Activated CD4-positive, alpha-beta T cell treated with anti-CD3 and anti-CD28 coated beads for 36 hours (primary cell): ENCODE measurements at regions of chr13 and their contacts with region 1.

Region 1: DNA sequence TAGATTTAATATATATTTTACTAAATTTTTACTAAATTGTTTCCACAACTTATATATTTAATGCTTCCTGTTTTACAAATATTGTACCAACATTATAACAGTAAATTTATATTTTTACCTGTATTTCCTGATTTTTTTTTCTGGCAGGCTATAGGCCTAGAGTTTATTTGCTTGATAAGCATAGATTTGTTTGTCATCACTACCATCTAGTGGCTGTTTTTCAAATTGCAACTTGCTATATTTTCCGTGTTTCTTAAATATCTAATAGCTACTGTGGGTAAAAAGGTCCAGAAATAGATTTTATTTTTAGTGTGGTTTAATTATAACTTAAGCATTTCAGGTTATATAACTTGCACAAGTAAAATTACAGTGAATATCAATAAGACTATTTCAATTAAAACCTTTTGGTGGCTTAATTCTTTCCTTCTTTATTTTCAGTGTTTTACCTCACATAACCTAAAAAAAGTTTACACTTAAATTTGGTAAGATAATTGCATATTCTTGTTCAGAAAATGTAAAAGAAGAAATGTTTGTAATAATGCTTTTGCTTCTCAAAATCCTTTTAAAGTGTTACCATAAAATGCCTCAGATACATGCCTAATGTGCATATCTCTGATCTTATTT is 60.6 kb downstream of the NDFIP2 start:
- DNase-seq: no peak
- ATAC-seq: no peak
- H3K4me3 Mint-ChIP-seq: no peak overlapping the region
- H3K27ac Mint-ChIP-seq: no peak overlapping the region
- H3K4me1 Mint-ChIP-seq: peaks cover 9% of the 10 kb centered on the region
- H3K27me3 Mint-ChIP-seq: no peaks in the 10 kb centered on the region

Region 2: DNA sequence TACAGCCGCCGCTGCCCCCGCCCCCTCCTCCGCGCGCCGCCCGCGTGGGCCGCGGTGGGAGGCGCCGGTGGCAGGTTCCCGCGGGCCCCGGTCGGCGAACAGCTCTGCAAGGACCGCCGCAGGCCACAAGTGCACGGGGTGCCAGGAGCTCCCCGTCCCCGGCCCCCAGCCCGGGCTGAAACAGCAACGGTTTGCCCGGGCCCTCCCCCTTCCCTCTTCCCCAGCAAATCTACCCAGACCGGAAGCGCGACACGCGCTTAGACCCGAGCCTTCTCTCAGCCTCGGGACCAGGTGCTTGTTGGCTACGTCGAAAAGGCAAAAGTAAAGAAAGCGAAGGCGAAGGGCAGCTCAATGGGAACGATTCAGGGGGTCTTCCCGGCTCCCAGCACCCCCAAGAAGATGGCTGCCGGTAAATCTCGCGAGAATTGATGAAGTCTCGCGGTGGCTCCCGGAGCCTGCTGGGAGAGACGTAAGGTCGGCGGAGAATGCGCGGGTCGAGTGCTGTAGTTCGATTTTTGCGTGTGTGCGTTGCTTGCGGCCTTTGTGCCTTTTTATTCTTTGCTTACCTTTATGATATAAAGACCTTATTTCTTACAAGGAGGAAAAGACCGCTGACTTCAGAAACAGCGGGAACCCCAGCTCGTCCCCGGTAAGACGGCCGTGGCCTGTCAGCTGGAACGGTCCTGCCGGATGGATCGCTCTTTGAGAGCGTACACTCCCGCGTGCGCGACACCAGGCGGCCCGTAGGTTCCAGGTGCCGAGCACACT is 135.5 kb before region 1 on chr13 and contains the start of gene RBM26:
- CTCF ChIA-PET with region 1: interaction called, 24 read pairs
- POLR2A ChIA-PET with region 1: interaction called, 6 read pairs
- intact Hi-C with region 1: loop called in 1 of 2 experiments (anchors 1 kb)
- DNase-seq: peak; percentile 97
- ATAC-seq: peak; percentile 87
- H3K4me3 Mint-ChIP-seq: no peak within 1 kb of the TSS
- H3K27ac Mint-ChIP-seq: peak within 1 kb of the TSS; percentile 98
- H3K4me1 Mint-ChIP-seq: peaks cover 44% of the 10 kb centered on the region
- H3K27me3 Mint-ChIP-seq: no peaks in the 10 kb centered on the region
- total RNA-seq, gene RBM26: 61.3 to 79.6 TPM

Region 3: DNA sequence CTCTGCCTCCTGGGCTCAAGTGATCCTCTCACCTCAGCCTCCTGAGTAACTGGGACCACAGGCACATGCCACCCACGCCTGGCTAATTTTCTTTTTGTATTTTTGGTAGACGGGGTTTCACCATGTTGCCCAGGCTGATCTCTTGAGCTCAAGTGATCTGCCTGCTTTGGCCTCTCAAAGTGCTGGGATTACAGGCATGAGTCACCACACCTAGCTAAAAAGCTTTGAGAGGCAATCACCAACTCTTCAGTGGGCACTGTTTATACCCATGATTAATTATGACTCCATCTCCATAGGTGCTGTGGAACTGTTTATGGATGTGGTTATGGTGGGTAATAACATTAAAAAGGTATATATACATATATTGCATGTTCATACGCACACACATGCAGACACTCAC is 128.0 kb before region 1 on chr13:
- CTCF ChIA-PET with region 1: interaction called, 29 read pairs
- POLR2A ChIA-PET with region 1: no interaction called
- intact Hi-C with region 1: no loop called
- DNase-seq: no peak
- ATAC-seq: peak; percentile 42
- H3K4me3 Mint-ChIP-seq: no peak overlapping the region
- H3K27ac Mint-ChIP-seq: no peak overlapping the region
- H3K4me1 Mint-ChIP-seq: peaks cover 5% of the 10 kb centered on the region
- H3K27me3 Mint-ChIP-seq: no peaks in the 10 kb centered on the region

Region 4: DNA sequence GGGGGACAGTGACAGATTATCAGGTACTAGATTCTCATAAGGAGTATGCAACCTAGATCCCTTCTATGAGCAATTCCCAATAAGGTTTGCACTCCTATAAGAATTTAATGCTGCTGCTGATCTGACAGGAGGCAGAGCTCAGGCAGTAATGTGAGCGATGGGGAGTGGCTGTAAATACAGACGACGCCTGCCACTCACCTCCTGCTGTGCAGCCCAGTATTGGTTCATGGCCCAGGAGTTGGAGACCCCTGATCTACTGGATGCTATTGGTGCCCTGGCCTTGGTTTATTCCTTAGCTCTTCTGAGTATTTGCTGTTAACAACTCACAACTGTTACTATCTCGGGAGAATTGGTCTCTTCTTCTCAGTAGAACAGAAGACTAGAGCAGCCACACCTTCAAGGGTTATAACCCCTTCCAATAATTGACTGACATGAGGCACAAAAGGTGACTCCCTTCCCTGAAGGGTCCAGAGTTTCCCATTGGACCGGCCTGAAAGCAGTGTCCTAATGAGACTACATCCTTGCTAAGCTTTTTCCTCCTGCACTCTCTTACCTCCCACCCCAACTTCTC is 100.5 kb before region 1 on chr13:
- CTCF ChIA-PET with region 1: interaction called, 12 read pairs
- POLR2A ChIA-PET with region 1: no interaction called
- intact Hi-C with region 1: no loop called
- DNase-seq: no peak
- ATAC-seq: no peak
- H3K4me3 Mint-ChIP-seq: no peak overlapping the region
- H3K27ac Mint-ChIP-seq: no peak overlapping the region
- H3K4me1 Mint-ChIP-seq: peaks cover 17% of the 10 kb centered on the region
- H3K27me3 Mint-ChIP-seq: no peaks in the 10 kb centered on the region

Region 5: GRCh38 chr13:79516595-79516994 is 24.9 kb before region 1 on chr13:
- CTCF ChIA-PET with region 1: interaction called, 25 read pairs
- POLR2A ChIA-PET with region 1: no interaction called
- intact Hi-C with region 1: no loop called
- DNase-seq: no peak
- ATAC-seq: no peak
- H3K4me3 Mint-ChIP-seq: no peak overlapping the region
- H3K27ac Mint-ChIP-seq: no peak overlapping the region
- H3K4me1 Mint-ChIP-seq: peaks cover 53% of the 10 kb centered on the region
- H3K27me3 Mint-ChIP-seq: no peaks in the 10 kb centered on the region

Region 6: DNA sequence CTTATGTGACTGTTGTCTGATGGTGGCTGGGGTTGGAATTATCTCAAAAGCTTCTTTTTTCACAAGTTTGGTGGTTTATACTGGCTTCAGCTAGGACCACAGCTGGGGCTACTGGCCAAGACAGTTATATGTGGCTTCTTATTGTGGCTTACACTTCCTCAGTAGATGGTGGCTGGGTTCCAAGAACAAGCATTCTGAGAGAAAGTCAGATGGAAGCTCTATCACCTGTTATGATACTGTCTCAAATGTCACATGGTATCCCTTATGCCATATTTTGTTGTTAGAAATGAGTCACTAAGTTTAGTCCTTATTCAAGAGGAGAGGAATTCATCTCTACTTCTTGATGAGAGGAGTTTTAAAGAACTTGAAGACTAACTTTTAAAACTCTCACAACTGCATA is 19.0 kb before region 1 on chr13:
- CTCF ChIA-PET with region 1: interaction called, 32 read pairs
- POLR2A ChIA-PET with region 1: no interaction called
- intact Hi-C with region 1: loop called in 1 of 2 experiments (anchors 2 kb)
- DNase-seq: peak; percentile 48
- ATAC-seq: peak; percentile 91
- H3K4me3 Mint-ChIP-seq: peak overlapping the region; percentile 26
- H3K27ac Mint-ChIP-seq: peak overlapping the region; percentile 91
- H3K4me1 Mint-ChIP-seq: peaks cover 26% of the 10 kb centered on the region
- H3K27me3 Mint-ChIP-seq: no peaks in the 10 kb centered on the region

Region 7: GRCh38 chr13:79528759-79529191 is 12.8 kb before region 1 on chr13:
- CTCF ChIA-PET with region 1: interaction called, 32 read pairs
- POLR2A ChIA-PET with region 1: no interaction called
- intact Hi-C with region 1: loop called in 1 of 2 experiments (anchors 2 kb)
- DNase-seq: no peak
- ATAC-seq: no peak
- H3K4me3 Mint-ChIP-seq: no peak overlapping the region
- H3K27ac Mint-ChIP-seq: no peak overlapping the region
- H3K4me1 Mint-ChIP-seq: peaks cover 19% of the 10 kb centered on the region
- H3K27me3 Mint-ChIP-seq: no peaks in the 10 kb centered on the region

Region 8: DNA sequence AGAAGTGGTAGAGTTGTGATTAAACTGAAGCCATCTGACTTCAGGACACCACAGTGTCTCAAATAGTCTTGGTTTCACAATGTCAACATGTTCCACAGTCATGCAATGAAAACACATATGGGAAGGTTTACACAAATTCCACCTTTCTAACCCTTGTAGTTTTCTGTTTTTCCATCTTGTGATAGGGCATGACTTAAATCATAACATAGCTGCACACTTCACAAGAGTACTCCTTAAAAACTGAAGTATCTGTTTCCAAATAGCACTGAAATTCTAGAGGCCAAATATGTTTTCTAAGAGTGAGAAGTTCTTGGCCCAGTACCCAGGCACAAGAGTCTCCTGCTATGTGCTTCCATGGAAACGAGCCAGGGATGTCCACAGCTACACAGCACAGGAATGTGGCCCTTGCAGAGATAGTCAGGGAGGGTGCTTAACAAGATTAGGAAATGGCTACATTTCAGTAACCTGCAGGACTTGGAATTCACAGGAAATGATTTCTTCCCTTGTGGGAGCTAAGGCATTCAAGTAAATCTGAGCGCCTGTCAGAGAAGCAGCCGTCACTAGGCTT is 208.5 kb after region 1 on chr13:
- CTCF ChIA-PET with region 1: no interaction called
- POLR2A ChIA-PET with region 1: no interaction called
- intact Hi-C with region 1: no loop called
- DNase-seq: no peak
- ATAC-seq: no peak
- H3K4me3 Mint-ChIP-seq: no peak overlapping the region
- H3K27ac Mint-ChIP-seq: no peak overlapping the region
- H3K4me1 Mint-ChIP-seq: no peaks in the 10 kb centered on the region
- H3K27me3 Mint-ChIP-seq: peaks cover 2% of the 10 kb centered on the region